Activated T-helper 1 cell treated with anti-CD3 and anti-CD28 coated beads, Interleukin-12 subunit alpha, Interleukin-12 subunit beta, Interleukin-2, Interleukin-4 antibody, amounts not matched to agents 30 ng/mL and 10 ng/mL and 1 ng/mL, durations not matched to agents 14 hours and 24 hours and 36 hours (primary cell): ENCODE measurements at regions of chr5 and their contacts with region 1.

Region 1: GRCh38 chr5:179623003-179623880 is at the start of gene HNRNPH1:
- DNase-seq: peak; percentile 97
- H3K4me3 Mint-ChIP-seq: peak within 1 kb of the TSS; percentile 94
- H3K27ac Mint-ChIP-seq: peak within 1 kb of the TSS; percentile 98
- H3K4me1 Mint-ChIP-seq: peaks cover 42% of the 10 kb centered on the region
- H3K27me3 Mint-ChIP-seq: peaks cover 2% of the 10 kb centered on the region
- total RNA-seq, gene HNRNPH1: 987 and 1,028 TPM in 2 replicates

Region 2: GRCh38 chr5:178232124-178232919 is 1390.9 kb before region 1 on chr5 and contains the start of gene PHYKPL:
- intact Hi-C with region 1: loop called (anchors 5 kb)
- DNase-seq: peak; percentile 75
- H3K4me3 Mint-ChIP-seq: peak within 1 kb of the TSS; percentile 90
- H3K27ac Mint-ChIP-seq: peak within 1 kb of the TSS; percentile 86
- H3K4me1 Mint-ChIP-seq: peaks cover 66% of the 10 kb centered on the region
- H3K27me3 Mint-ChIP-seq: no peaks in the 10 kb centered on the region
- total RNA-seq, gene PHYKPL: 84.4 and 86.7 TPM in 2 replicates

Region 3: DNA sequence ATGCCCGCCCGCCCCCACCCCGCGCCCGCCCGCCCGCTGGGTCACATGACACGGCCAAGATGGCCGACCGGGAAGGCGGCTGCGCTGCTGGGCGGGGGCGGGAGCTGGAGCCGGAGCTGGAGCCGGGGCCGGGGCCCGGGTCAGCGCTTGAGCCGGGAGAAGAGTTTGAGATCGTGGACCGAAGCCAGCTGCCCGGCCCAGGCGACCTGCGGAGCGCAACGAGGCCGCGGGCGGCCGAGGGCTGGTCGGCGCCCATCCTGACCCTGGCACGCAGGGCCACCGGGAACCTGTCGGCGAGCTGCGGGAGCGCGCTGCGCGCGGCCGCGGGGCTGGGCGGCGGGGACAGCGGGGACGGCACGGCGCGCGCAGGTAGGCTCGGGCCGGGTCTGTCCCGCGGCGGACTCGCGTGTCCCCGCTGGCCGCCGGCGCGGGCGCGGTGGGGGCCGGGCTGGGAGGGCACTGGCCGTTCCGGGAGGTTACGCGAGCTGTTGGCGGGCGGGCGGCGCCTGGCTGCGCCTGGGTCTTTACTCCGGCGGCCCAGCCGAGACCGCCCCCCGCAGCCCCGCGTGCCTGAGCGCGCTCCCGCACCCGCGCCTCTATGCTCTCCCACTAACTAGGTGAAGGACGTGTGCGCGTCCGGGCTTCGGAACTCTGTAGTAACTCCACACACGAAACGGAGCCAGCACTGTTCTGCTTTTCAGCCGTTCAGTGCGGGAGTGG is 72.6 kb before region 1 on chr5 and contains the start of gene RUFY1:
- intact Hi-C with region 1: loop called (anchors 1 kb)
- DNase-seq: peak; percentile 83
- H3K4me3 Mint-ChIP-seq: peak within 1 kb of the TSS; percentile 99
- H3K27ac Mint-ChIP-seq: peak within 1 kb of the TSS; percentile 99
- H3K4me1 Mint-ChIP-seq: peaks cover 28% of the 10 kb centered on the region
- H3K27me3 Mint-ChIP-seq: peaks cover 2% of the 10 kb centered on the region
- total RNA-seq, gene RUFY1: 37.0 and 38.3 TPM in 2 replicates

Region 4: DNA sequence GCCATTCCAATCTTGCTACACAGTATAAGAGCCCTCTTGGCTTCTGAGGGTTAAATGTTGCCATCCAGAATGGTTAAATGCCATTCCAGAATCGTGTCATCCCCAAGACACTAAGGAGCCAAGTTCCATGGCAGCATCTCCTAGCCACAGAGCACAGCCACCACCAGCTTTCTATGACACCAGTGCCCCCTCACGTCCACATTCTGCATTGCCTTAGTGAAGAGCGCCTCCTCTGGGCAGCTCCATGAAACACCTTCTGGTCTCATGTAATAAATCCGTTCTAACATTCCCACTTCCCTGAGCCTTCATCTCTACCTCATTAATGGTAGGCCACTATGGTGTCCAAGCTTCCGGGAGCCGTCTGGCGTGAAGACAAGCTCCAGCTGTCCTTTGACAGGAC is 45.1 kb after region 1 on chr5:
- intact Hi-C with region 1: no loop called
- DNase-seq: no peak
- H3K4me3 Mint-ChIP-seq: no peak overlapping the region
- H3K27ac Mint-ChIP-seq: no peak overlapping the region
- H3K4me1 Mint-ChIP-seq: no peaks in the 10 kb centered on the region
- H3K27me3 Mint-ChIP-seq: peaks cover 2% of the 10 kb centered on the region

Region 5: DNA sequence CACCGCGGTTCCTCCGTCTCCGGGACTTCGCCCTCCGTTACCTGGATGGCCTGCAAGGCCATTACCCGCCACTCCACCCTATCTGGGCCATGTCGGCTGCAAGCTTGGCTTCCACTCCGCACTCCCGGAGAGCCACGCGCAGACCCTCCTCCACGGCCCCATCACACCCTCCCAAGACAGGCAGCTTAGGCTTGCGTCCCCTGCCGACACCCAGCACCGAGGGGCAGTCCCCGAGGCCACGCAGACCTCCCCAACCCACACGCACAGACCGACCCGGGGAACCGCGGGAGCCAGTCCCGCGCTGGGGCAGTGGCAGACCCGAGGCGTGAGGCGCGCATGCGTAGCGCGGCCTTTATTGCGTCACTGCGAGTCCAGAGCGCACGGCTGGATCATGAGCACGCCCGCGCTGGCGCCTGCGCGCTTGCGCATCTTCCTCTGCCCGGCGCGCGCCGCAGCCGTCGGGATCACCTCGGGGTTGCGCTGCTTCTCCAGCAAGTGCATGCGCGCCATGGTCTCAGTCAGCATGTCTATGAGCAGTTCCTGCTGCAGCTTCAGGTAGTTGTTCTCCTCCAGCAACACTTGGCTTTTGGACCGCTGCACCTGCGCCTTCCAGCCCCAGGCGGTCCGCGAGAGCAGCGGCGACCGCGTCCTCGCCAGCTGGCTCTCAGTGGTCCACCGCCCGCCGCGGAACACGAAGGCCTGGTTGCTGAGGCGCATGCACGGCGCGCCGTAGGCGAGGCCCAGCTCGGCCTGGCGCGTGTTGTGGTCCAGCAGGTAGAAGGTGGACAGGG is 55.2 kb after region 1 on chr5:
- intact Hi-C with region 1: loop called (anchors 1 kb)
- DNase-seq: peak; percentile 93
- H3K4me3 Mint-ChIP-seq: peak overlapping the region; percentile 99
- H3K27ac Mint-ChIP-seq: peak overlapping the region; percentile 98
- H3K4me1 Mint-ChIP-seq: peaks cover 21% of the 10 kb centered on the region
- H3K27me3 Mint-ChIP-seq: no peaks in the 10 kb centered on the region

Region 6: DNA sequence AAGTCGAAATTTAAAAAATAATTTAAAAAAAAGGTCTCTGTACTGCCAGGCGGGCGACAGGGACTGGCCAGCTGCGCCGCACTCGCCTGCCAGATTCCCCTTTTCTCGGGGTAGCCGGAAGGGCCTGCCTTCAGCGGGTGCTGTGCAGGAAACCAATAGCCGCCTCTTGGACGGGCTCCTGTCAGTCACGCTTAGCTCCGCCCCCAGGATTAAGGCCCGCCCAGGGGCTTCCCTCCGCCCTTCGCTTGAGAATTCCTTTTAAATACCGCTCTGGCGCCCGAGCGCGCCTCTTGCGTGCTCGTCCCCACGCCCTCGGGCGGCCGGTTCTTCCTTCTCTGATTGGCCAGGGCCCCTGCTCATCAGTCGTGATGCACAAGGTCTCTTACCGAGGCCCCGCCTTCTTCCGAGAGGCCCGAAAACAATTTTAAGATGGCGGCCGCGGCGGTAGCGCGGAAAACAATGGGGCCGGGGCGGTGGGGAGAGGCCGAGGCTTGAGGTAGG is 109.2 kb after region 1 on chr5 and contains the start of gene MAML1:
- intact Hi-C with region 1: loop called (anchors 1 kb)
- DNase-seq: peak; percentile 100
- H3K4me3 Mint-ChIP-seq: peak within 1 kb of the TSS; percentile 95
- H3K27ac Mint-ChIP-seq: peak within 1 kb of the TSS; percentile 93
- H3K4me1 Mint-ChIP-seq: peaks cover 26% of the 10 kb centered on the region
- H3K27me3 Mint-ChIP-seq: no peaks in the 10 kb centered on the region
- total RNA-seq, gene MAML1: 36.0 and 37.6 TPM in 2 replicates

Region 7: GRCh38 chr5:179821581-179822432 is 198.6 kb after region 1 on chr5:
- intact Hi-C with region 1: loop called (anchors 1 kb)
- DNase-seq: peak; percentile 83
- H3K4me3 Mint-ChIP-seq: peak overlapping the region; percentile 95
- H3K27ac Mint-ChIP-seq: peak overlapping the region; percentile 97
- H3K4me1 Mint-ChIP-seq: peaks cover 48% of the 10 kb centered on the region
- H3K27me3 Mint-ChIP-seq: no peaks in the 10 kb centered on the region

Region 8: DNA sequence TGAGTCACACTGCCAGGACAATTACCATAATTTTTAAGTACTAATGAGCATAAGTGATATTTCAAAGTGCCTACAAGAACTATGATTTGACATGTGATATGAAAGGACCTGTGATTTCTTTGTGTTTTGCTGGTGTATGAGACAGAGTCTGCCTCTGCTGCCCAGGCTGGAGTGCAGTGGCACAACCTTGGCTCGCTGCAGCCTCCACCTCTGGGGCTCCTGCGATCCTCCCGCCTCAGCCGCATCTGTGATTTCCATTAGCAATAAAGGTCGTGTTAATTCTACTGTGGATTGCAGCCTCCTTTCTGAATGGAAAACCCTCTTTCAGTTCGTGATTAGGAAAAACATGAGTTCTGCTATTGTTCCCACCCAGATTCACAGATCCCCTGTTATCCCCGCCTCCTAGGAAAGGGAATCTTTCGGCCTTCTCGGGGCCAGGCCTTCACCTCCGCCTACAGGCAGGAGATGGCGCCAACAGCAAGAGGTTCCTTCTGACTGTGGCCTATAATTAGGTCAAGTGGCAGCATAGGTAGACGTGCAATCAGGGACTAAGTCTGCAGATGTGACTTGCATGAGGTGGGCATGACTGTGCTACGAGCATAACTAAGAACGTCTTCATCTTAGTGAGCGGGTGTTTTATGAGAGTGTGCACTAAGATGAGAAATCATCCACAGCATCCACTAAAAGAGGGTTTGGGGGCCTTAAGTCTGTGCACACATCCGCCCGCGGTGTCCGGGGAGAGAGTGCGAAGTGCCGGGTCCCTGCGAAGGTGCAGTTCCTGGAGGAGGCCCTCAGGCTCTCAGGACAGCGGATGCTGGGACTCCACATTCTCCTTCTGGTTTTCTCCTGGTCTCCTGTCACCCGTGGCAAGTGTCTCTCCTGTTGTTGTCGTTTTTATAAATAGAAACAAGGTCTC is 1558.7 kb after region 1 on chr5:
- intact Hi-C with region 1: loop called (anchors 10 kb)
- DNase-seq: no peak
- H3K4me3 Mint-ChIP-seq: peak overlapping the region; percentile 63
- H3K27ac Mint-ChIP-seq: peak overlapping the region; percentile 64
- H3K4me1 Mint-ChIP-seq: peaks cover 22% of the 10 kb centered on the region
- H3K27me3 Mint-ChIP-seq: peaks cover 5% of the 10 kb centered on the region